ENCODE measurements at regions of chr13 and their contacts with region 1.

Region 1: DNA sequence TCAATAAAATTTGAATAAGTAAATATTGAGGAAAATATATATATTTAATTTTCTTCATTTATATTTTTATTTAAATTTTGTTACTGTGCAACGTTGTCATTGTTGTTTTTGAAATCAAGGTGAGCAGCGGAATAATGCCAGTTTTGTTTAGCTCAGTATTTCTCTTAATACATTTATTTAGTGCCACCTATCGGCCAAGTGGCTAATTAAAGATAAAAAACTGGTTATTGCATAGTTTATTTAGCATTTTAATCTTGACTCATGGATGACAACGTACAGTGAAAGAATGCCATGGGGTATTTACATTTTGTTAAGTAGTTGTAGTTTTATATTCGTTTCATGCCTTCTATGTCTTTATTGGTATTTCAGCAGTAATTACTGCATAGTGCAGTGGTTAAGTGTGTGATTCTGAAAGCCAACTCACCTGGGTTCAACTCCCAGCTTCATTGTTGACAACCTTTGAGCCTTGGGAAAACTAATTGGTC is 265.9 kb downstream of the MYO16 start:
- DNase-seq: no peak
- H3K4me3 ChIP-seq: no peak overlapping the region
- H3K27ac ChIP-seq: no peak overlapping the region
- H3K4me1 ChIP-seq: no peaks in the 10 kb centered on the region
- H3K27me3 ChIP-seq: no peaks in the 10 kb centered on the region
- CTCF ChIP-seq: peak; percentile 20 to 61 (median 56)
- POLR2A ChIP-seq: no peak

Region 2: DNA sequence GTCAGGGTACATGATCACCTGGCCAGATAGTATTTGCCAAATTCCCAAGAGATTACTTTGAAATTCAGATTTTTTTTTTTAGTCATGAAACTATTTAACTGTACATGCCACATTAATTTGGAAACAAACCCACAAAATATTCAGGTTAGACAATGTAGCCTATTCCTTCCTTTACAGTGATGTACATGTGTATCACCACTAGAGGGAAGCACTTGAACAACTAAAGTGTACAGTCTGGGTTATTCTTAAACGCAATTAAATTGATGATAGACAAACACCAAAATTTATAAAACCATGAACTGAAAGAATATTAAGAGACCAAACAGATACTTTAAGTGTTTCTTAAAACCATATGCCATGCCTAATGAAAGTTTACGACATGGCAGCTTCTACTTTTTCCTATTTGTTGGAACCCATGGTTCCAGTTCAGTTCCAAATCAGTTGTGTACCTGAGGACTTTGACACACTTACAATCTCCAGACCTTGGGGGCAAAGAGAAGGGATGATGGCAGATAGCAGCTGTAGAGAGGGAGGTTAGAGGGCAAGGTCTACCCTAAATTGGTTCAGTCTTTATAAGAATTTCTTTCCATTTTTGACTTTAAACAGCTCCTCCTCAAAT is 572.9 kb before region 1 on chr13:
- intact Hi-C with region 1: loop called (anchors 5 kb)
- DNase-seq: no peak
- H3K4me3 ChIP-seq: no peak overlapping the region
- H3K27ac ChIP-seq: no peak overlapping the region
- H3K4me1 ChIP-seq: no peaks in the 10 kb centered on the region
- H3K27me3 ChIP-seq: no peaks in the 10 kb centered on the region
- CTCF ChIP-seq: peak; percentile 43 to 75 (median 70)
- POLR2A ChIP-seq: no peak

Region 3: DNA sequence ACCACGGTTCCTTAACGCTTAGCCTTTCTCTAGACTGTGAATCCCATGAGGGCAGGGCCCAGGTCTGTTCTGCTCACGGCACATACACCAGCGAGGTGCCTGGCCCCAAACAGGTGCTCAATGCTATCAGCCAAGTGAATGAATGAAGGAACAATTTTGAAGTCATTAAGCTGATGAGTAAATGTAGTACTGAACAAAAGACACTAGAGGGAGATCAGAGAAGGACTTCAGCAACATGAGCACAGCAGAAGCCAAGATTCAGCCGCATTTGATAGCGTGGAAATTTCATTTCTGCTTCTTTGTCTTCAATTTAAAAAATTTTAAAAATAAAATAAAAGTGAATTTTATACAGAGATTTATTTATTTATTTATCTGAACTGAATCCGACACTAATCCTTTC is 285.9 kb before region 1 on chr13:
- intact Hi-C with region 1: loop called (anchors 5 kb)
- DNase-seq: no peak
- H3K4me3 ChIP-seq: no peak overlapping the region
- H3K27ac ChIP-seq: no peak overlapping the region
- H3K4me1 ChIP-seq: no peaks in the 10 kb centered on the region
- H3K27me3 ChIP-seq: no peaks in the 10 kb centered on the region
- CTCF ChIP-seq: peak in 3 of 4 experiments; percentile 21 to 41 (median 32)
- POLR2A ChIP-seq: no peak

Measured in prostate gland (tissue), 2 donors.